ENCODE measurements at regions of chrX and their contacts with region 1.

Region 1: DNA sequence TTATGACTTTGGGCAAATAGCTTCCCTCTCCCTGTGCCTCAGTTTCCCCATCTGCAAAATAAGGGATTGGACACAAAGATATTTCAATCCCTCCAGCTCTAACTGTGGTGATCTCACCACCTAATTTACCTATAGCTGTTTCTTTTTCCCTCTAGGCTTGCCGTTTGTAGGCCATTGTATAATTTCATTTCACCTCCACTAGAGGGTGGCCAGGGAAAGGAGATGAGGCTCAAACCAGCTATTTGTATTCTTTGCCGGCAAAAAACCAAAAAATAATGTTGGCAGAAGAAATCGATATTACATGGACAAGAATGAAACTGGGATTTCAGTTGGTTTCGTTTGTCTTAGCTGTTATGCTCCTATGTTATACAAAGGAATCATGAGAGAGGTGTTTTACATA is 36.1 kb upstream of the DOCK11 start:
- DNase-seq: no peak
- H3K4me3 ChIP-seq: no peak overlapping the region
- H3K27ac ChIP-seq: no peak overlapping the region
- H3K4me1 ChIP-seq: no peaks in the 10 kb centered on the region
- H3K27me3 ChIP-seq: no peaks in the 10 kb centered on the region
- CTCF ChIP-seq: peak; percentile 13

Region 2: GRCh38 chrX:118603981-118604380 is 144.5 kb after region 1 on chrX:
- intact Hi-C with region 1: loop called (anchors 10 kb)
- DNase-seq: peak; percentile 33
- H3K4me3 ChIP-seq: no peak overlapping the region
- H3K27ac ChIP-seq: no peak overlapping the region
- H3K4me1 ChIP-seq: no peaks in the 10 kb centered on the region
- H3K27me3 ChIP-seq: no peaks in the 10 kb centered on the region
- CTCF ChIP-seq: peak; percentile 85

Region 3: GRCh38 chrX:119093991-119094737 is 634.7 kb after region 1 on chrX:
- intact Hi-C with region 1: no loop called
- DNase-seq: no peak
- H3K4me3 ChIP-seq: no peak overlapping the region
- H3K27ac ChIP-seq: no peak overlapping the region
- H3K4me1 ChIP-seq: no peaks in the 10 kb centered on the region
- H3K27me3 ChIP-seq: no peaks in the 10 kb centered on the region
- CTCF ChIP-seq: no peak